Colonic mucosa (tissue), 4 donors: ENCODE measurements at regions of chr3 and their contacts with region 1.

Region 1: GRCh38 chr3:42581709-42582473 is at the start of gene SEC22C:
- DNase-seq: peak; percentile 94
- H3K4me3 ChIP-seq: peak within 1 kb of the TSS; percentile 81
- H3K27ac ChIP-seq: peak within 1 kb of the TSS; percentile 81
- H3K4me1 ChIP-seq: peaks cover 4% of the 10 kb centered on the region
- H3K27me3 ChIP-seq: no peaks in the 10 kb centered on the region
- CTCF ChIP-seq: no peak
- total RNA-seq, gene SEC22C: 17.1 to 17.5 TPM

Region 2: GRCh38 chr3:42749753-42750231 is 167.9 kb after region 1 on chr3:
- intact Hi-C with region 1: loop called (anchors 10 kb)
- DNase-seq: no peak
- H3K4me3 ChIP-seq: no peak overlapping the region
- H3K27ac ChIP-seq: no peak overlapping the region
- H3K4me1 ChIP-seq: no peaks in the 10 kb centered on the region
- H3K27me3 ChIP-seq: no peaks in the 10 kb centered on the region
- CTCF ChIP-seq: no peak